ENCODE measurements at regions of chr14 and their contacts with region 1.

Region 1: GRCh38 chr14:24806061-24806678 is 172.2 kb upstream of the GZMB start:
- DNase-seq: peak; percentile 57 to 91
- H3K4me3 ChIP-seq: no peak overlapping the region
- H3K27ac ChIP-seq: no peak overlapping the region
- H3K4me1 ChIP-seq: peaks cover 0 to 3% (median 0%) of the 10 kb centered on the region in 4 experiments; a peak in 1 of 7 replicates
- H3K27me3 ChIP-seq: no peaks in the 10 kb centered on the region; a peak in 1 of 7 replicates
- CTCF ChIP-seq: peak; percentile 78 to 91 (median 90)
- EP300 ChIP-seq: no peak
- POLR2A ChIP-seq: no peak
- RAD21 ChIP-seq: peak; percentile 96 to 97

Region 2: DNA sequence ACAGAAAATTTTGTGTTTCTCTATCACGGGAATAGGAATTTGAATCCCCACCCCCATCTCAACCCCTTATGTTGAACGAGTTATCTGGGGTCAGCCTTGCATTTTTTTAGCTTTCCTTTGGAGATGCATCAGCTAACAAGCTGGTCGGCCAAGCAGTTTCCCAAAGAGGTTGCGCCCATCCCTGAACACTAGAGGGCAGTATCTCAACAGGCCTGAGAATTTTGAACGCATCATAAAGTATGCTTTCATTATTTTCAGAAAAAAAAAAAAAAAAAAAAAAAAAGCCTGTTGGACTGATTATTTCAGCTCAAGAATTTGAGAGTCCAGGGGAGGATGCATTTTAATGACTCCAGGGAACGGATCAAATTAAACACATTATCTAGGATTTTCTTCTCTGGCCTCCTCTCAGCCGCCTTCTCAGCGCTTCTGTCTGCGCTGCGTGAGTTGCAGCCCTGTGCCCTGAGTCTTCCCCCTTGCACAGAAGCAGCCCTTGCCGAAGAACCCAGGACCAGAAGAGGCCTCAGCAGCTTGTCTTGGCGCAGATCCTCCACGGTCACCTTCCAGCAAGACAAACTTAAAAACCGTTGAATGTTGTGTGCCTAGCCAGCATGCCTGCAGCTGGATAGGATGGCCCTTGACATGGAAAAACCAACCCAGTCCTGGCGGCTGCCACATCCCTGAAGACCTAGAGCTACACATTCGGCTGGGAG is 95.6 kb before region 1 on chr14:
- CTCF ChIA-PET with region 1: interaction called, 13 read pairs
- POLR2A ChIA-PET with region 1: no interaction called
- DNase-seq: peak in 1 of 2 experiments; percentile 67
- H3K4me3 ChIP-seq: no peak overlapping the region
- H3K27ac ChIP-seq: no peak overlapping the region
- H3K4me1 ChIP-seq: no peaks in the 10 kb centered on the region
- H3K27me3 ChIP-seq: no peaks in the 10 kb centered on the region
- CTCF ChIP-seq: peak; percentile 66 to 68 (median 66)
- EP300 ChIP-seq: no peak
- POLR2A ChIP-seq: no peak
- RAD21 ChIP-seq: peak; percentile 76 to 81

Region 3: GRCh38 chr14:24794644-24795305 is 11.4 kb before region 1 on chr14:
- CTCF ChIA-PET with region 1: interaction called, 30 read pairs
- POLR2A ChIA-PET with region 1: no interaction called
- DNase-seq: no peak
- H3K4me3 ChIP-seq: no peak overlapping the region
- H3K27ac ChIP-seq: no peak overlapping the region
- H3K4me1 ChIP-seq: no peaks in the 10 kb centered on the region; a peak in 1 of 7 replicates
- H3K27me3 ChIP-seq: no peaks in the 10 kb centered on the region
- CTCF ChIP-seq: no peak
- EP300 ChIP-seq: no peak
- POLR2A ChIP-seq: no peak
- RAD21 ChIP-seq: no peak

Region 4: GRCh38 chr14:24826390-24826789 is 20.2 kb after region 1 on chr14:
- CTCF ChIA-PET with region 1: interaction called, 21 read pairs
- POLR2A ChIA-PET with region 1: interaction called, 3 read pairs
- DNase-seq: no peak
- H3K4me3 ChIP-seq: no peak overlapping the region
- H3K27ac ChIP-seq: no peak overlapping the region
- H3K4me1 ChIP-seq: no peaks in the 10 kb centered on the region
- H3K27me3 ChIP-seq: no peaks in the 10 kb centered on the region
- CTCF ChIP-seq: no peak
- EP300 ChIP-seq: no peak
- POLR2A ChIP-seq: no peak
- RAD21 ChIP-seq: no peak

Region 5: GRCh38 chr14:25034803-25035681 is 228.9 kb after region 1 on chr14:
- CTCF ChIA-PET with region 1: interaction called, 80 read pairs
- POLR2A ChIA-PET with region 1: no interaction called
- DNase-seq: no peak
- H3K4me3 ChIP-seq: no peak overlapping the region
- H3K27ac ChIP-seq: no peak overlapping the region
- H3K4me1 ChIP-seq: no peaks in the 10 kb centered on the region
- H3K27me3 ChIP-seq: no peaks in the 10 kb centered on the region
- CTCF ChIP-seq: no peak
- EP300 ChIP-seq: no peak
- POLR2A ChIP-seq: no peak
- RAD21 ChIP-seq: no peak

Region 6: DNA sequence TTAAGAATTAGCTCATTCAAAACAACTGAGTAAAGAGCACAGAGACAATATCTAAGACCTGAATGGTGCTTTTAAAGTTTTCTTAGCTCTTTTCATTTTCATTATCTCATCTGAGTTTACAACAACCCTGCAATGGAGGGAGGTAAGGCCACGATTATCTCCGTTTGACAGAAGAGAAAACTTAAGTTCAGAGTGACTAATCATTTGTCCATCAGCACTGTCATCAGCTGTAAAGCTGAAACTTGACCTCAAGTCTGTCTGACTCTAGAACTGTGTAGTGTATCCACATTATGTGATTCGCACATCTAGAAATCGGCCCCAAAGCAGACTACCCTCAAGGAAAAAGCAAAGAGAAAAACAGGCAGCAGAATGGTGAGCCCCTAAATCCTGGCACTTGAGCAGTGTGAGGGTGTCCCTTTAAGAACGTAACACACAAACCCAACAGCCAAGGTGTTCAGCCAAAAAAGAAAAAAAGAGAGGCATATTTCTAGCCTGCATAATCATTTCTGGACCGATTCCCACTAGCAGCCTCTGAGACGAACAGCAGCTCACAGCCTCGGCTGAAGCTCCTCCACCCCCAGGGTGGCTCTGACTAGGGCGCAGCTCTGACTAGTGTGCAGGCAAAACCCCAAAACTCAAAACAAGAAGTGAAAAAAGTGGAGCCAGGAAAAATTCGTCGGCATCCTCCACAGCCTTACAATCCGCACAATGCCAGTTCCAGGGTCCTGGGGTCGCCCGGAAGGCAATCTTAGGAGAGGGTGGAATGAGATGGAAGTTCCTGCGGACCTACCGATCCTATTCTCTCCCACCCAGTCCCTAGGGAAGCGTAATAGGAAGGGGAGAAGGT is 242.2 kb after region 1 on chr14:
- CTCF ChIA-PET with region 1: interaction called, 39 read pairs
- POLR2A ChIA-PET with region 1: interaction called, 4 read pairs
- DNase-seq: no peak
- H3K4me3 ChIP-seq: peak overlapping the region; percentile 45 to 80 (median 64); a peak in 7 of 8 replicates
- H3K27ac ChIP-seq: no peak overlapping the region
- H3K4me1 ChIP-seq: peaks cover 2 to 13% (median 5%) of the 10 kb centered on the region in 4 experiments; a peak in 5 of 7 replicates
- H3K27me3 ChIP-seq: peaks cover 8 to 43% (median 32%) of the 10 kb centered on the region in 4 experiments
- CTCF ChIP-seq: no peak
- EP300 ChIP-seq: no peak
- POLR2A ChIP-seq: no peak
- RAD21 ChIP-seq: no peak

Region 7: GRCh38 chr14:25132732-25133422 is 326.7 kb after region 1 on chr14:
- CTCF ChIA-PET with region 1: interaction called, 80 read pairs
- POLR2A ChIA-PET with region 1: no interaction called
- DNase-seq: peak; percentile 60 to 78
- H3K4me3 ChIP-seq: peak overlapping the region in 1 of 4 experiments; percentile 28; a peak in 2 of 8 replicates
- H3K27ac ChIP-seq: no peak overlapping the region
- H3K4me1 ChIP-seq: no peaks in the 10 kb centered on the region
- H3K27me3 ChIP-seq: peaks cover 0 to 8% (median 5%) of the 10 kb centered on the region in 4 experiments; a peak in 3 of 7 replicates
- CTCF ChIP-seq: peak; percentile 75 to 87 (median 80)
- EP300 ChIP-seq: no peak
- POLR2A ChIP-seq: no peak
- RAD21 ChIP-seq: peak; percentile 78 to 81